ENCODE measurements at regions of chr14 and their contacts with region 1.

Region 1: DNA sequence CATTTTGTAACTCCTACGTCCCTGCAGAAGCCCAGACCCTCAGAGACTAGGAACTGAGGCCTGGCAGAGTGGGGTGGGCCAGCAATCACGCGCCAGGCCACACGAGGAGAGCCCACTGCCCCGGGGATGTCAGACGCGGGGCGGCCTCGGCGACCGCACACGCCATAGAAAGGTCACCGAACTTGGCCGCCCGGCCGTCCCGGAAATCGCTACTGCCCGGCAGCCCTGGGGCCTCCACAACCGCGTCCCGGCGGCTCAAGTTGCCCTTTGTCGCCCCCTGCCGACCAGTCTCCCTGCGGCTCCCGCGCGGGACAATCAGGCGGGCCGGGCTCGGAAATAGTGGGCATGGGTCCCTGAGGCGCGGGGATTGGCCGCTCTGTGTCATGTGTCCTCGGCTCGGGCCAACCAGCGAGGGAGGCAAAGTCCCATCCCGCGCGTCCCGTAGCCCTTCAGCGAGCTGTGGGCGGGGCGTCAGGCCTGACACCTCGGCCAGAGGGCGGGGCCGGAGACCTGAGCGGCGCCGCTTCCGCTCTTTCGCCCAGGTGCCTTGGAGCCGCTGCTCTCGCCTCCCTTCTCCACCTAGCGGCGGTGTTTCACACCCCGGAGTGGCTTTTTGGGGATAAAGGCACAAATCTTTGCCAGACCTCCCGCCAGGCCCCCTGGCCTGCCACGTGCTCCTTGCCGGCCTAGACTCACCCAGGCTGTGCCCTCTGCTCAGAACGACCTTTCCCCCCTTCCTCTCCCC is 33.4 kb upstream of the DEGS2 start:
- DNase-seq: peak; percentile 100
- H3K4me3 Mint-ChIP-seq: peak overlapping the region; percentile 75
- H3K27ac Mint-ChIP-seq: peak overlapping the region; percentile 94
- H3K4me1 Mint-ChIP-seq: peaks cover 10% of the 10 kb centered on the region
- H3K27me3 Mint-ChIP-seq: no peaks in the 10 kb centered on the region

Region 2: DNA sequence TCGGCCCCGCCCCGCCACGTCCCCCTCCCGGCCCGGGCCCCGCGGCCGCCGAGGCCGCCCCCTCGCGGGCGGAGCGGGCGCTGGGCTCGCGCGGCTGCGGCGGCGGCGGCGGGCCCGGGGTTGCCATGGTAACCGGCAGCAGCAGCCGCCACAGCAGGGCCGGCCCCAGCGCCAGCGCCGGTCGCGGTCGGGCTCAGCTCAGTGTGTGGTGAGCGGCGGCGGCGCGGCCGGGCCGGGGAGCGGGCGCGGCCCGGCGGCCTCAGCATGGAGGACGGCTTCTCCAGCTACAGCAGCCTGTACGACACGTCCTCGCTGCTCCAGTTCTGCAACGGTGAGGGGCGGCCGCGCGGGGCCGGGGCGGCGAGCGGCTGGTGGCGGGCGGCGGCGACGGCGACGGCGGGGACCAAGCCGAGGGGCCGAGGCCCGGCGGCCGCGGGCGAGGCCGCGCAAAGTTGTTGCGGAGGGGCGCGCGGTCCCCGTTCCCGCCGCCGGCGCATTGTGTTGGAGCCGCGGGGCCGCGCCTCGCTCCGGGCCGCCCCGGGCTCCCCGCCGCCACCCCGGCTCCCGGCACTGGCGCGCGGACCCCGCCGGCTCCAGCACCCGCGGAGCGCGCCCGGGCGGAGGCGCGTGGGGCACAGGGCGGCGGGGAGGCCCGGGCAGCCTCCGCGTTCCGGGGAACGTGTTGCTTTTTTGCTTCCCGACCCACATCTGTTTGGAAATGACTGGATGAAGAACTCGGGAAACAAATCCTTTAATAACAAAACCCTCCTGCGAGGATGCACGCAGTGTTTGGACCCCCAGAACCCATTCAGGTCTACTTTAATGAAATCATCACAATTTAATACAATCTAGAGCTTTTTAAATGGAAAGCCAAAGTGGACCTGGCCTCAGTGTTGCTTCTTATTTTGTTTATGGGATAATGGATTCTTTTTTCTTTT is 399.4 kb before region 1 on chr14 and contains the start of gene EML1:
- CTCF ChIA-PET with region 1: interaction called, 3 read pairs
- intact Hi-C with region 1: loop called (anchors 5 kb)
- DNase-seq: peak; percentile 77
- H3K4me3 Mint-ChIP-seq: peak within 1 kb of the TSS; percentile 58
- H3K27ac Mint-ChIP-seq: peak within 1 kb of the TSS; percentile 15
- H3K4me1 Mint-ChIP-seq: peaks cover 21% of the 10 kb centered on the region
- H3K27me3 Mint-ChIP-seq: peaks cover 14% of the 10 kb centered on the region
- total RNA-seq, gene EML1: 0.91 to 1.2 TPM

Region 3: DNA sequence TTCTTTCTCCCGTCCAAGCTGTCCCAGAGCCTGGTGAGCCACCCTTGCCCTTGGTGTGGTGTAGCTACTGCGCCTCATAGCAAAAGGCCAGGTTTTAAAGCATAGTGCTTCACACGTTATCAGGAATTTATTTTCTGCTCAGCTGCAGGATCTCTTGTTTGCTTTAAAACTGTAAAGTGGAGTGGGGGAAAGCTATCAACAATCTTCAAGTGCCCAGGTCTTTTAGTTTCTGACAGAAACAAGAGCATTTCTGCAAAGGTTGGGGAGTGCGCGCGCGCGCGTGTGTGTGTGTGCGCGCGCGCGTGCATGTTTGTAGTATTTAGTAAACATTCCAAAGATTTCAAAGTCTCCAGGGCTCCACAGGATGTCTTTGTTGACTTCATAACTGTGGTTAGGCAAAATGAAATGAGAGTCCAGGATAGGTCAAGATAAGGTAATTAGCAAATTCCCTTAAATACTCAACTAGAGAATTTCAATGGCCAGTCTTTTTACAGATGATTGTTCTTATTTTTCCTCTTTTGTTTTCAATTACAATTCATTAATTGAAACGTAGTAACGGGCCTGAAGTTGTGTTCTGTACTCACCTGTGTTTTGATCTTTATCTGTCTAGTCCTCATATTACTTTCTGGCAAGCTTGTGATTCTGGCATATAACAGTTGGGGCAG is 354.1 kb before region 1 on chr14:
- CTCF ChIA-PET with region 1: no interaction called
- intact Hi-C with region 1: no loop called
- DNase-seq: no peak
- H3K4me3 Mint-ChIP-seq: no peak overlapping the region
- H3K27ac Mint-ChIP-seq: no peak overlapping the region
- H3K4me1 Mint-ChIP-seq: no peaks in the 10 kb centered on the region
- H3K27me3 Mint-ChIP-seq: peaks cover 28% of the 10 kb centered on the region

Region 4: GRCh38 chr14:99995700-99996356 is 197.0 kb before region 1 on chr14:
- CTCF ChIA-PET with region 1: interaction called, 5 read pairs
- intact Hi-C with region 1: loop called (anchors 5 kb)
- DNase-seq: peak; percentile 82
- H3K4me3 Mint-ChIP-seq: no peak overlapping the region
- H3K27ac Mint-ChIP-seq: no peak overlapping the region
- H3K4me1 Mint-ChIP-seq: peaks cover 11% of the 10 kb centered on the region
- H3K27me3 Mint-ChIP-seq: peaks cover 4% of the 10 kb centered on the region

Region 5: DNA sequence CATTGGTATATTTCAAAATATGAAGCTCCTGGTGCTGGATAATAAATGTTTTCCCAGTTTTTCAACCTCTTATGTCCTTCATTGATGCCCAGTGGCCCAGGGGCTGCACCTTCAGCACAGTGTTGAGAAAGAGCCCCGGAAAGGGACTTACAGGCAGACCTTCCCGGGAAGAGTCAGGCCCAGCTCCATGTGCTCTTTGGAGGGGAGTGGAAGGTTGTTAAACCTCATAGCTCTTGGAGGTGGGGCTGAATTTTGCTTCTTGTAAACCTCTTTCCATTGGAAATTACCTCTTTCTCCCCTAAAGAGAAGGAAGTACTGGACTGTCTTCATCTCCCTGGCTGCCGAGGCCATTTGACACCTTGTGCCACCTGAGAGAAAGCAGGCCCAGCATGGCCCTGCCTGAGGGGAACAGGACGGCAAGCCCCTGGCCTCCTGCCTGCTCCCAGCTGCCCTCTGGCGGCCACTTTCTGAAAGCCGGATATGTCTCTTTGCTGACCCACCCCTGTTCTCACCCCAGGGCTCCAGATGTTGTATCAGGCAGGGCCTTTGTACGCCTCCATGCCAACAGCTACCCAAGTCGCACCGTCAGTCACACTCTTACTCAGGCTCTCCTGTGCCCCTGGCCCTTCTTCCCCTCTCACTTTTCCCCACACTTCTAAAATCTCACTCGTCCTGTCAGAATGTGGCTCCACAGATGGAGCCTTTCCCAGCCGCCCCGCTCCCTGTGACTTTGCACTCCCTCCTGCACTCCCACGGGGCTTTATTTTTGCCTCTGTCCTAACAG is 84.6 kb before region 1 on chr14:
- CTCF ChIA-PET with region 1: interaction called, 13 read pairs
- intact Hi-C with region 1: loop called (anchors 1 kb)
- DNase-seq: peak; percentile 94
- H3K4me3 Mint-ChIP-seq: no peak overlapping the region
- H3K27ac Mint-ChIP-seq: peak overlapping the region; percentile 94
- H3K4me1 Mint-ChIP-seq: peaks cover 75% of the 10 kb centered on the region
- H3K27me3 Mint-ChIP-seq: no peaks in the 10 kb centered on the region

Region 6: GRCh38 chr14:100221533-100222223 is 28.8 kb after region 1 on chr14:
- CTCF ChIA-PET with region 1: interaction called, 24 read pairs
- intact Hi-C with region 1: loop called (anchors 1 kb)
- DNase-seq: peak; percentile 81
- H3K4me3 Mint-ChIP-seq: no peak overlapping the region
- H3K27ac Mint-ChIP-seq: no peak overlapping the region
- H3K4me1 Mint-ChIP-seq: peaks cover 8% of the 10 kb centered on the region
- H3K27me3 Mint-ChIP-seq: no peaks in the 10 kb centered on the region

Region 7: GRCh38 chr14:100285021-100285912 is 92.4 kb after region 1 on chr14:
- CTCF ChIA-PET with region 1: no interaction called
- intact Hi-C with region 1: loop called (anchors 1 kb)
- DNase-seq: peak; percentile 75
- H3K4me3 Mint-ChIP-seq: peak overlapping the region; percentile 69
- H3K27ac Mint-ChIP-seq: no peak overlapping the region
- H3K4me1 Mint-ChIP-seq: peaks cover 8% of the 10 kb centered on the region
- H3K27me3 Mint-ChIP-seq: no peaks in the 10 kb centered on the region

Measured in activated naive CD4-positive, alpha-beta T cell treated with anti-CD3 and anti-CD28 coated beads for 36 hours (primary cell).